OCI-LY7 (cell line): ENCODE measurements at regions of chr7 and their contacts with region 1.

Region 1: GRCh38 chr7:2403014-2403717 is at the start of gene CHST12:
- DNase-seq: peak; percentile 96
- H3K4me3 ChIP-seq: peak within 1 kb of the TSS; percentile 91
- H3K27ac ChIP-seq: peak within 1 kb of the TSS; percentile 21
- H3K4me1 ChIP-seq: peaks cover 50% of the 10 kb centered on the region
- CTCF ChIP-seq: no peak
- total RNA-seq, gene CHST12: 3.1 and 3.9 TPM in 2 replicates

Region 2: GRCh38 chr7:2232766-2233520 is 170.2 kb before region 1 on chr7 and contains the start of gene MAD1L1:
- CTCF ChIA-PET with region 1: no interaction called
- POLR2A ChIA-PET with region 1: no interaction called
- intact Hi-C with region 1: loop called (anchors 5 kb)
- DNase-seq: peak; percentile 92
- H3K4me3 ChIP-seq: peak within 1 kb of the TSS; percentile 89
- H3K27ac ChIP-seq: peak within 1 kb of the TSS; percentile 19
- H3K4me1 ChIP-seq: peaks cover 37% of the 10 kb centered on the region
- CTCF ChIP-seq: no peak
- total RNA-seq, gene MAD1L1: 65.3 and 125 TPM in 2 replicates

Region 3: DNA sequence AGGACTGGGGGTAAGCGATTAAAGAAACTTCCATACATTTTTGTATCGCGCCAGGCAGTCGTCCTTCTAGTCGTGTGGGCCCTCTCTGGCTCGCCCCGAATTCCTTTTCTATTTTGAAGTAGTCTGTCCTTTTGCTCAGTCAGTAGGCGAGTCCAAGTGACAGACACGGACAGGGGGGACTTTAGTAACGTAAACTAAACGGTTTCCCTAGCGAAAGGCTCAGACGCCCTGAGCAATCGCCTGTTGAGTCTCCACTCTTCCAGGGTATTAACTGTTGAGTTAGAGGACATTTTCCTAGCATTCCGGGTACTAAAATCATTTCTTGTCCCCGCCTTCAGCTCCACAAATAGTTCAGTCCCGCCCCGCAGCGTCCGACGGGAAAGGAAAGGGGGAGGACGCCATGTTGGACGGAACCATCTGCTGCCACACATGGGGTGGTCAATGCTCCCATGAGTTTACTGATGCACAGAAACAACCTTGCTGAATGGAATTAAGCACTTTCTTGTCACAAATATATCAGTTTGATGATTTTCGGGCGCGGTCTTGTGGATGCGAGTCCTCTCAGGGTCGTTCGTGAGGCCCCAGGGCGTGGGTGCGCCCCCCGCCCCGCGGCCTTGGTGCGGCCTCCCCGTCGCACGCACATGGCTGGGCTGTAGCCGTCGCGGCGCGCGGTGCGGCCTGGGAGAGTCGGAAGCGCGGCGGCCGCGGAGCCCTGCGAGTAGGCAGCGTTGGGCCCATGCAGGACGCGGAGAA is 48.8 kb before region 1 on chr7 and contains the start of gene EIF3B:
- CTCF ChIA-PET with region 1: no interaction called
- POLR2A ChIA-PET with region 1: interaction called, 4 read pairs
- intact Hi-C with region 1: loop called (anchors 2 kb)
- DNase-seq: peak; percentile 97
- H3K4me3 ChIP-seq: peak within 1 kb of the TSS; percentile 91
- H3K27ac ChIP-seq: peak within 1 kb of the TSS; percentile 79
- H3K4me1 ChIP-seq: peaks cover 20% of the 10 kb centered on the region
- CTCF ChIP-seq: no peak
- total RNA-seq, gene EIF3B: 181 and 241 TPM in 2 replicates

Region 4: GRCh38 chr7:2431260-2431867 is 28.2 kb after region 1 on chr7:
- CTCF ChIA-PET with region 1: no interaction called
- POLR2A ChIA-PET with region 1: interaction called, 8 read pairs
- intact Hi-C with region 1: loop called (anchors 1 kb)
- DNase-seq: peak; percentile 26
- H3K4me3 ChIP-seq: no peak overlapping the region
- H3K27ac ChIP-seq: no peak overlapping the region
- H3K4me1 ChIP-seq: no peaks in the 10 kb centered on the region
- CTCF ChIP-seq: peak; percentile 78